H1 (cell line): ENCODE measurements at regions of chr2 and their contacts with region 1.

Region 1: GRCh38 chr2:50564766-50565165 is 467.2 kb downstream of the NRXN1 start:
- DNase-seq: no peak
- H3K4me3 ChIP-seq: no peak overlapping the region
- H3K27ac ChIP-seq: no peak overlapping the region
- H3K4me1 ChIP-seq: no peaks in the 10 kb centered on the region
- H3K27me3 ChIP-seq: no peaks in the 10 kb centered on the region
- CTCF ChIP-seq: no peak
- EP300 ChIP-seq: no peak
- POLR2A ChIP-seq: no peak
- RAD21 ChIP-seq: no peak

Region 2: GRCh38 chr2:50575232-50575631 is 10.5 kb after region 1 on chr2:
- CTCF ChIA-PET with region 1: interaction called, 11 read pairs
- POLR2A ChIA-PET with region 1: no interaction called
- DNase-seq: peak in 1 of 2 experiments; percentile 9
- H3K4me3 ChIP-seq: no peak overlapping the region
- H3K27ac ChIP-seq: no peak overlapping the region
- H3K4me1 ChIP-seq: no peaks in the 10 kb centered on the region
- H3K27me3 ChIP-seq: no peaks in the 10 kb centered on the region
- CTCF ChIP-seq: peak; percentile 39 to 64 (median 50)
- EP300 ChIP-seq: no peak
- POLR2A ChIP-seq: no peak
- RAD21 ChIP-seq: peak; percentile 48 to 56